Dorsolateral prefrontal cortex (tissue), 120 donors: ENCODE measurements at regions of chr10 and their contacts with region 1.

Region 1: DNA sequence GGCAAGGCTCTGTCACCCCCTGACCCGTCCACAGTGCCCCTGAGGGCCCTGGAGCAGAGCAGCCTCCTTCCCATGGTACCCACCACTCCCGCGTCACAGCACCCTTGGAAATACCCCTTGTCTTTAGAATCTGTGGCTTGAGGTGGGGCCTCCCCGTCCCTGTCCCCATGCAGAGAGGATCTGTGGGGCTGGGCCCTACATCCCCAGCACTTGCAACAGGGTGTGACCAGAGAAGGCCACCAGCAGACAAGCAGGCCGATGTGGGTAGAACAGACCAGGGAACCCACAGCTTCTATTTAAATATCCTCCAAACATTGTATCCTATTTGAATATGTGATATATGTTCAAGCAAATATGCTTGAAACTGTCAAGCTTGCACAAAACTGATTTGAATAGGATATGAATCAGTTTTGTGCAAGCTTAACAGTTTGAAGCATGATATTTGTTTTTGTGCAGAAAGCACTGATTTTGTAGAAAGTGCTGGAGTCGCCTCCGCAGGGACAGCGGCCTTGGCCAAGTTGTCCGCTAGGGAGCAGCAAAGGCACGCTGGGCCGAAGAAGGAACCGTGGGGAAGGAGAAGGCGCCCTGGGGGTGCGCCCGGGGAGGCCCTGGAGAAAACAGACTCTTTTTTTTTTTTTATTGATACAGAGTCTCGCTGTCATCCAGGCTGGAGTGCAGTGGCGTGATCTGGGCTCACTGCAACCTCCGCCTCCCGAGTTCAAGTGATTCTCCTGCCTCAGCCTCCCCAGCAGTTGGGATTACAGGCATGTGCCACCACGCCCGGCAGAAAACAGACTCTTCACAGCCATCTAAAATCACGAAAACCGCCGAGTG is 2.2 kb downstream of the CFAP46 start:
- DNase-seq: peak; percentile 45 to 83 (median 71)
- H3K4me3 ChIP-seq: no peak overlapping the region
- H3K27ac ChIP-seq: peak overlapping the region in 16 of 59 donors; percentile 13 to 85 (median 42)
- H3K27me3 ChIP-seq: peaks cover 0 to 17% (median 0%) of the 10 kb centered on the region in 45 donors
- CTCF ChIP-seq: peak; percentile 38 to 91 (median 82)

Region 2: GRCh38 chr10:132951926-132952325 is 11.8 kb after region 1 on chr10:
- intact Hi-C with region 1: no loop called
- DNase-seq: no peak
- H3K4me3 ChIP-seq: no peak overlapping the region
- H3K27ac ChIP-seq: no peak overlapping the region
- H3K27me3 ChIP-seq: peaks cover 0 to 9% (median 0%) of the 10 kb centered on the region in 45 donors
- CTCF ChIP-seq: no peak

Region 3: GRCh38 chr10:133087679-133088178 is 147.6 kb after region 1 on chr10 and contains the start of gene ADGRA1:
- intact Hi-C with region 1: loop called in 1 of 2 experiments (anchors 10 kb)
- DNase-seq: peak in 8 of 10 donors; percentile 54 to 86 (median 72)
- H3K4me3 ChIP-seq: peak within 1 kb of the TSS; percentile 47 to 80 (median 65)
- H3K27ac ChIP-seq: peak within 1 kb of the TSS in 58 of 59 donors; percentile 19 to 96 (median 84)
- H3K27me3 ChIP-seq: peaks cover 0 to 28% (median 0%) of the 10 kb centered on the region in 45 donors
- CTCF ChIP-seq: no peak
- total RNA-seq, gene ADGRA1: 11.7 to 48.6 (median 31.6) TPM